ENCODE measurements at regions of chr21 and their contacts with region 1.

Region 1: DNA sequence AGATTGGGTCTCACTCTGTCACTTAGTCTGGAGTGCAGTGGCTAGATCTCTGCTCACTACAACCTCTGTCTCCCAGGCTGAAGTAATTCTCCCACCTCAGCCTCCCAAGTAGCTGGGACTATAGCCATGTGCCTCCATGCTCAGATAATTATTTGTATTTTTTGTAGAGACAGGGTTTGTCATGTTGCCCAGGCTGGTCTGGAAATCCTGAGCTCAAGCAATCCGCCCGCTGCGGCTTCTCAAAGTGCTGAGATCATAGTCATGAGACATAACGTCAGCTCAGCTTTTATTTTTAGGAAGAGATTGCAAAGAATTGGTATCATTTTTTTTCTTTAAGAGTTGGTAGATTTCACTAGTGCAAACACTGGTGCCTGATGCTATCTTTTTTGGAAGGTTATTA is 244.9 kb downstream of the DSCAM start:
- DNase-seq: no peak
- ATAC-seq: no peak

Region 2: GRCh38 chr21:40668555-40669275 is 66.6 kb after region 1 on chr21:
- intact Hi-C with region 1: loop called (anchors 10 kb)
- DNase-seq: no peak
- ATAC-seq: no peak

Region 3: DNA sequence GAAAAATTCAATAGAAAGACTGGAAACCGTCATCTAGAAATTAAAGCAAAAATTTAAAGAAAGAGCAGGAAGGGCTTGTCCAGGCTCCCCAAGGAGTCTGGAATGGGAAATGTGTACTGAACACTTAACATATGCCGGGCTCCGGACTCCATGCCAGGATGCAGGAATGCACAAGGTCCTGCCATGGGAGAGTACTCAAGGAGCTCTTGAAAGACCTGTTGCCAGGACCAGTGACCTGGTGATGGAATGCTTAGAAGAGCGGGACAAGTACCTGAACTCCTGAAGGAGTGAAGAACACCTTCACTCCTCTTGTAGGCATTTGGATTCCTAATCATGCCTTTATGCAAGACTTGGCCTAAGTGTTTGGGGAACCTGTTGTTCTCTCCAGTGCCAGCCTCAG is 261.8 kb after region 1 on chr21:
- intact Hi-C with region 1: no loop called
- DNase-seq: no peak
- ATAC-seq: no peak

Measured in left ventricle myocardium superior (tissue), 1 donor.